ENCODE measurements at regions of chr10 and their contacts with region 1.

Region 1: GRCh38 chr10:43390759-43391158 is 18.2 kb downstream of the HNRNPF start:
- DNase-seq: no peak
- H3K4me3 ChIP-seq: no peak overlapping the region
- H3K27ac ChIP-seq: no peak overlapping the region
- H3K4me1 ChIP-seq: peaks cover 0 to 6% (median 4%) of the 10 kb centered on the region in 4 experiments; a peak in 6 of 7 replicates
- H3K27me3 ChIP-seq: no peaks in the 10 kb centered on the region
- CTCF ChIP-seq: peak; percentile 62 to 77 (median 65)
- EP300 ChIP-seq: no peak
- POLR2A ChIP-seq: no peak
- RAD21 ChIP-seq: peak; percentile 69 to 78

Region 2: GRCh38 chr10:43372765-43373361 is 17.9 kb before region 1 on chr10:
- CTCF ChIA-PET with region 1: interaction called, 12 read pairs
- POLR2A ChIA-PET with region 1: interaction called, 11 read pairs
- DNase-seq: no peak
- H3K4me3 ChIP-seq: no peak overlapping the region
- H3K27ac ChIP-seq: no peak overlapping the region
- H3K4me1 ChIP-seq: peaks cover 4 to 20% (median 7%) of the 10 kb centered on the region in 4 experiments
- H3K27me3 ChIP-seq: 0 out of 7 replicates have a peak, but pooled peaks cover 0 to 2% (median 0%) of the 10 kb centered on the region in 4 experiments
- CTCF ChIP-seq: no peak
- EP300 ChIP-seq: no peak
- POLR2A ChIP-seq: no peak
- RAD21 ChIP-seq: no peak

Region 3: DNA sequence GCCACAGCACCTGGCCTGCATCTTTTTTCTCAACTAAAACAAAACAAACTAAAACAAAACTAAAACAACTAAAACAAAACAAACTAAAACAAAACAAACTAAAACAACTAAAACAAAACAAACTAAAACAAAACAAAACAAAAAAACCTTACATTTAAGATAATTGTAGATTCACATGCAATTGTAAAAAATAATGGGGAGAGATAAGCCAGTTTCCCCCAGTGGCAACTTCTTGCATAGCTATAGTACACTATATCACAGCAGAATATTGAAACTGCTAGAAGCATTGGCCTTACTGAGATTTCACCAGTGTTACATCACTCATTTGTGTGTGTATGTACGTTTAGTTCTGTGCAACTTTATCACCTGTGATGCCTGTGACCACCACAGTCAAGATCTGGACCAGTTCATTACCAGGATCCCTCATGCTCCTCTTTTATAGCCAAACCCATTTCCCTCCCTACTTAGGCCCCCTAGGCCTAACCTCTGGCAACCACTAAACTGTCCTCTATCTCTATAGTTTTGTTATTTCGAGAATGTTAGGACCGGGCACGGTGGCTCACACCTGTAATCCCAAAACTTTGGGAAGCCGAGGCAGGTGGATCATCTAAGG is 10.0 kb before region 1 on chr10:
- CTCF ChIA-PET with region 1: interaction called, 14 read pairs
- POLR2A ChIA-PET with region 1: interaction called, 112 read pairs
- DNase-seq: no peak
- H3K4me3 ChIP-seq: no peak overlapping the region
- H3K27ac ChIP-seq: no peak overlapping the region
- H3K4me1 ChIP-seq: peaks cover 0 to 12% (median 5%) of the 10 kb centered on the region in 4 experiments; a peak in 6 of 7 replicates
- H3K27me3 ChIP-seq: no peaks in the 10 kb centered on the region
- CTCF ChIP-seq: no peak
- EP300 ChIP-seq: no peak
- POLR2A ChIP-seq: no peak
- RAD21 ChIP-seq: no peak

Region 4: GRCh38 chr10:43407576-43408330 is 17.0 kb after region 1 on chr10:
- CTCF ChIA-PET with region 1: interaction called, 5 read pairs
- POLR2A ChIA-PET with region 1: interaction called, 104 read pairs
- DNase-seq: peak in 1 of 2 experiments; percentile 71
- H3K4me3 ChIP-seq: peak overlapping the region; percentile 61 to 97 (median 89)
- H3K27ac ChIP-seq: peak overlapping the region; percentile 99
- H3K4me1 ChIP-seq: peaks cover 0 to 9% (median 3%) of the 10 kb centered on the region in 4 experiments; a peak in 5 of 7 replicates
- H3K27me3 ChIP-seq: no peaks in the 10 kb centered on the region
- CTCF ChIP-seq: peak in 2 of 3 experiments; percentile 8 to 19; a peak in 2 of 4 replicates
- EP300 ChIP-seq: no peak
- POLR2A ChIP-seq: peak; percentile 23 to 91
- RAD21 ChIP-seq: no peak; a peak in 1 of 4 replicates

Region 5: DNA sequence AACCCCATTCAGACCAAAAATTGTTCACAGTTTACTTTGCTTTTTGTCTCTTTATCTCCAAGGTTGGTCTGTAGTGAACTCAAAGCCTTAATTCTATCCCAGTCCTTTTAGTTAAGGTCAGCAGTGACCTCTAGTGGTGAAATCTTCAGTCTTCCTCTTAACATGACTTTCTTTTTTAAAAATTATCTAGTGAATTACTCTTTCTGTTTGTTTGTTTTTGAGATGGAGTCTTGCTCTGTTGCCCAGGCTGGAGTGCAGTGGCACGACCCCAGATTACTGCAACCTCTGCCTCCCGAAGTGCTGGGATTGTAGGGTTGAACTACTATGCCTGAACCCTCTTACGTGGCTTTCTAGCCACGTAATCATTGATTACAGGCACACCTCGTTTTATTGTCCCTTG is 71.2 kb after region 1 on chr10:
- CTCF ChIA-PET with region 1: interaction called, 14 read pairs
- POLR2A ChIA-PET with region 1: interaction called, 8 read pairs
- DNase-seq: no peak
- H3K4me3 ChIP-seq: no peak overlapping the region
- H3K27ac ChIP-seq: no peak overlapping the region
- H3K4me1 ChIP-seq: peaks cover 0 to 5% (median 1%) of the 10 kb centered on the region in 4 experiments; a peak in 4 of 7 replicates
- H3K27me3 ChIP-seq: no peaks in the 10 kb centered on the region
- CTCF ChIP-seq: peak in 2 of 3 experiments; percentile 43 to 53; a peak in 2 of 4 replicates
- EP300 ChIP-seq: no peak
- POLR2A ChIP-seq: no peak
- RAD21 ChIP-seq: peak; percentile 78

Measured in H1 (cell line).